ENCODE measurements at regions of chr11 and their contacts with region 1.

Region 1: GRCh38 chr11:62753736-62754603 is at the start of gene ZBTB3:
- DNase-seq: peak; percentile 99
- ATAC-seq: peak; percentile 98 to 99
- H3K4me3 ChIP-seq: peak within 1 kb of the TSS; percentile 62 to 86 (median 73)
- H3K27ac ChIP-seq: peak within 1 kb of the TSS; percentile 86 to 98 (median 92)
- H3K4me1 ChIP-seq: peaks cover 14 to 19% of the 10 kb centered on the region in 2 donors
- H3K27me3 ChIP-seq: no peaks in the 10 kb centered on the region
- CTCF ChIP-seq: no peak
- POLR2A ChIP-seq: peak; percentile 49 to 70
- total RNA-seq, gene ZBTB3: 5.6 to 10.5 (median 7.7) TPM

Region 2: GRCh38 chr11:62166371-62166770 is 587.6 kb before region 1 on chr11:
- in situ Hi-C with region 1: no loop called
- intact Hi-C with region 1: no loop called
- DNase-seq: no peak
- ATAC-seq: no peak
- H3K4me3 ChIP-seq: no peak overlapping the region
- H3K27ac ChIP-seq: no peak overlapping the region
- H3K4me1 ChIP-seq: peaks cover 12 to 13% of the 10 kb centered on the region in 2 donors
- H3K27me3 ChIP-seq: no peaks in the 10 kb centered on the region
- CTCF ChIP-seq: no peak
- POLR2A ChIP-seq: no peak

Region 3: GRCh38 chr11:62726915-62727763 is 26.8 kb before region 1 on chr11 and contains the start of gene HNRNPUL2:
- in situ Hi-C with region 1: no loop called
- intact Hi-C with region 1: loop called (anchors 1 kb)
- DNase-seq: peak; percentile 97 to 99
- ATAC-seq: peak; percentile 79 to 81
- H3K4me3 ChIP-seq: peak within 1 kb of the TSS; percentile 63 to 95 (median 80)
- H3K27ac ChIP-seq: peak within 1 kb of the TSS; percentile 87 to 94 (median 90)
- H3K4me1 ChIP-seq: peaks cover 44 to 47% of the 10 kb centered on the region in 2 donors
- H3K27me3 ChIP-seq: no peaks in the 10 kb centered on the region
- CTCF ChIP-seq: no peak
- POLR2A ChIP-seq: peak; percentile 93 to 97
- total RNA-seq, gene HNRNPUL2: 4.8 to 14.9 (median 11.8) TPM